Transverse colon (tissue), 4 donors: ENCODE measurements at regions of chr6 and their contacts with region 1.

Region 1: DNA sequence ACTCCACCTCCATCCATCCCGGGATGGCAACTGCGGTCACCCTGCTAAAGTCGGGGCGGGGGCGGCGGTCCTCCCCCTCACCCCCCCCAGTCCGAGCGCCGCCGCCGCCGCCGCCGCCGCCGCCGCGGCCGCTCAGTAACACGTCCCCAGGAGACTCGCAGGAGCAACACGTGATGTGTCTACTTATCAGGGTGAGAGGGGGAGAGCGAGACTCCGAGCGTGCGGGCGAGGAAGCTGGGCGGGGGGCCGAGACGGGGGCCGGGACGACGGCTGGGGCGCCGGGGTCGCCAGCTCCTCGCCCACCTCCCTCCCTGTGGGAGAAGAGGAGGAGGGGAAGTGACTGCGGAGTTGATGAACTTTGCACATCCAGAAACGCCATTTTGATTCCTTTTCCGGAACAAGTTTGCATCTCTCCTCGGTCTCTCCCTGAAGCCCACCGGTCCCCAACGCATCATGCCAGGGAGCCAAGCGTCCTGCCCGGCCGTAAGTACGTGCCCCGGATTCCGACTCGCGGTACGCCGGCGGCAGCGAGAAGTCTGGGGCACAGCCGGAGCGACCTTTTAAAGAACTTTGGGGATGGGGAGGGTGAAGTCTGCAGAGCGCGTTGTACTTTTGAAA is at the start of gene RREB1:
- DNase-seq: peak; percentile 67
- H3K4me3 ChIP-seq: peak within 1 kb of the TSS; percentile 69 to 84 (median 76)
- H3K27ac ChIP-seq: peak within 1 kb of the TSS; percentile 94 to 99 (median 98)
- H3K4me1 ChIP-seq: peaks cover 16 to 43% (median 32%) of the 10 kb centered on the region in 4 donors
- H3K27me3 ChIP-seq: no peaks in the 10 kb centered on the region
- CTCF ChIP-seq: no peak
- EP300 ChIP-seq: no peak
- POLR2A ChIP-seq: peak; percentile 45
- total RNA-seq, gene RREB1: 73.9 to 214 (median 107) TPM

Region 2: DNA sequence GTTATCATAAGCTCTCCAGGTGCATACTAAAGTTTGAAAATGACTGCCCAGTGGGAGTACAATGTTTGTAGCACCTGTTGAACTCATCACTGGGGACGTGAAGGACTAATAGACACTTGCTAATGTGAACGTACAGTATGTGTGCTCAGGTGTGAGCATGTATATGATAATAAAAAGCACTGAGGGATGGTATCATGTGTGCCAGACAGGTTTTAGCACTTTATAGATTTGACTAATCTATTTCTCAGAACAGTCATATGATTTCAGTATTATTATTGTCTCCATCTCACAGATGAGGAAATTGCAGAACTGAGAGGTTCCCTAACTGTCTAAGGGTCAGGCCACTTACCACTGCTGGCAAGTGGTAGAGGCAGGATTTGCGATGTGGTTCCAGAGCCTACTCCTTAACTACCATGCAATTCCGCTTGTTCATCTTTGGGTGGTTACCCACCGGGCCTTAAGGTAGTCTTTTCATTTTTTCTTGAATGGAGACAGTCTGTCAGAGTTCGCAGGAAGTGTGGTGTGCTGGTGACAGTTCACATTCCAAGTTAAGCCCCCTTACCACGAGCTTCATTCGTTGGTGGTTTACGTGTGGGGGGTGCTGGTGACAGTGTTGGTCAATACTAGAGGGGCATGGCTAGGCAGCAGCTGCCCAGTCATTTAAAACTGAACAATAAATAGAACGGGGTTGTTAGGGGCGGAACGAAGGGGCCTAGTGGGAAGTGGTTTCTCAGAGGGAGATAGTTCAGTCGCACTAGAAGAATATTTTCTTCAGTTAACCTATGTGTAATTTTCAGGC is 46.9 kb after region 1 on chr6:
- in situ Hi-C with region 1: no loop called
- intact Hi-C with region 1: loop called (anchors 5 kb)
- DNase-seq: no peak
- H3K4me3 ChIP-seq: no peak overlapping the region
- H3K27ac ChIP-seq: peak overlapping the region in 3 of 4 donors; percentile 52 to 66 (median 62)
- H3K4me1 ChIP-seq: peaks cover 48 to 86% (median 59%) of the 10 kb centered on the region in 4 donors
- H3K27me3 ChIP-seq: no peaks in the 10 kb centered on the region
- CTCF ChIP-seq: no peak
- EP300 ChIP-seq: no peak
- POLR2A ChIP-seq: no peak